HEK293 (cell line): ENCODE measurements at regions of chrX and their contacts with region 1.

Region 1: DNA sequence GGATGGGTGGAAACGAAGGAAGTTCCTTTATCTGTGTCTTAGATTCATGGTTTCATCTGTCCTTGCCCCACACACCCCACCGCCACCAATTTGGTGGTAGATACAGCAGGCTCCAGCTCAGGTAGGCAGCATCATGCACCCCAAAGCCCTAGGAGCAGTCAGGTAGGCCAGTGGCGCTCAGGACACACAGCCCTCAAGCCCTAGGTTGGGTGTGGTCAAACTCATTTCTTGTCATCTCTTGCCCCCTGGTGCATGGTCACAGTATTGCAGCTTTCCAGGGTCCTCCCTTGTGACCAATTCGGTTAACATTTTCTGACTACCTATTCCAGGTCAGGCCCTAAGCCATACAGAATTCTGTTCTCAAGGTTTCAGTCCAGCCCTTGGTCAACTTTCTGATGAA is 14.5 kb upstream of the PRRG3 start:
- H3K4me3 ChIP-seq: no peak overlapping the region
- H3K27ac ChIP-seq: no peak overlapping the region
- H3K4me1 ChIP-seq: no peaks in the 10 kb centered on the region
- CTCF ChIP-seq: peak; percentile 80

Region 2: DNA sequence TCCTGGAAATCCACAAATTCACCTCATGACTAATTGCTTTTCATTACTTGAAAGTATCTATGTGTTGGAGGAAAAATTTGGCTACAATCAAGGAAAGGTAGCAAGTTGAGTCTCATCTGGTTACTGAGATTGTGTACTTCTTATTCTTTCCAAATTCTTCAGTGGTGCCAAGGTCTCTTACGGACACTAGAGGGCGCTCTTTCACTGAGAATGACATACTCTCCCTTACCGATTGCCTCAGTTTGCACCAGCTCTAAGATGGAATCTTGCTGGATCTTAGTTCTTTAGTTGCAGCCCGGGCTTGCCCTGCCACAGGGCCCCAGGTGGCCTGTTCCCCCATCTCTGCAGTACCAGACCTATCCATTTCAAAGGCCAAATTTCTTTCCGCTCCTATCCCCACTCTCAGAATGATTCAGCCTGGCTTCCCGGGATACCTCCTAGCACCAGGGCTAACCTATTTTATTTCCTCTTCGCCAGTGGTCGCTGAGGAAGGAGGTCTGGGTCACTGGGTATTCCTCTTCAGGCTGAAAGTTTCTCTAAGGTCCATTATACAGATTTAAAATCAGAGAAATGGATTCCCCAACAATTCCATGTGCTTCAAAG is 529.0 kb before region 1 on chrX:
- CTCF ChIA-PET with region 1: interaction called, 48 read pairs
- POLR2A ChIA-PET with region 1: no interaction called
- H3K4me3 ChIP-seq: no peak overlapping the region
- H3K27ac ChIP-seq: no peak overlapping the region
- H3K4me1 ChIP-seq: no peaks in the 10 kb centered on the region
- CTCF ChIP-seq: peak; percentile 81

Region 3: DNA sequence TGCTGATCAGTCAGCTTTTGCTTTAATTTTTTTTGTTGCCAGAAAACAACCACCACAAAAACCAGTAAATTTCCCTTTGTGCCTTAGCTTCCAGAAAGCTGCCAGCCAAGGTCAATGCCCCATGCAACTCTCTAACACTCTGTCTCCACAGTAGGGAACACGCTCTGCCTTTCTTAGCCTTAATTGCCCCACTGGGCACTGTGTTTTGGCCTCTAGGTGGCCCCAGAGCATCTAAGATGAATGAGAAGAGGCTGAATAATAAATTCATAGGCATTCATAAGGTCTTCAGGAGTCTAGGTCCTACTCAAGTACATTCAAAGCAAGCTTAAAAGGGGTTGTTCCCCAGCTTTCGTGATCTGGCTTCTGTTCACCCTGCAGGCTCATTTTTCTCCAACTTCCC is 175.0 kb before region 1 on chrX:
- CTCF ChIA-PET with region 1: interaction called, 26 read pairs
- POLR2A ChIA-PET with region 1: no interaction called
- H3K4me3 ChIP-seq: no peak overlapping the region
- H3K27ac ChIP-seq: no peak overlapping the region
- H3K4me1 ChIP-seq: no peaks in the 10 kb centered on the region
- CTCF ChIP-seq: no peak

Region 4: DNA sequence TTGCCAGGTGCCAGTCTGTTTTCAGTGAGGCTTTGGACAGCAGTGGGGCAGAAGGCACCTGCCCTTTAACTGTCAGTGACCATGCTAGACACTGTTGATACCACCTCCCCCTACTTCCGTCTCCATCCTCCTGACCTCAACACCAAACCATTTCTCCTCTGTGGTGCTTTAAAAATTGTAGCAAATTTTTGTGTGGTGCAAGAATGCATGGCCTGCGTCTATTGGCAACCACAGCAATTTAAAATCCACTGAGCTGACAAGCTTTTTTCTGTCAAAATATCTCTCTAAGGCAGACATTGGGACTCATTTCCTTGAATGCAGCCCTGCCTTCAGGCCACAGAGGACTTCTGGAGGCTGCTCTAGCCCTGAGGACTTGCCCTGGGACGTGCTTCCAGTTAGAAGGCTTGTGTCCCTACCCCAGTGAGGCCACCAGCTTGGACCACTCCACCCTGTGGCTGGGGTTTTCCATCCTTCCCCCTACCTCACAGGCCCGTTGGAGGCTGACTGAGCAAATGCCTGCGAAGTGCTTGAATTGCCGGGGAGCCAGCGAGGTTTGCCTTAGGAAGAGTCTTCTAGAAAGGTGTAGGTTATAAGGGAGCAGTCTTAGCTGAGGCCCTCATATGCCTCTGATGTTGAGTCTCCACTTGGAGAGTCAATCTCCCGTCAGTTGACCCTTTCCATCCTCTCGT is 21.4 kb after region 1 on chrX:
- CTCF ChIA-PET with region 1: no interaction called
- POLR2A ChIA-PET with region 1: no interaction called
- H3K4me3 ChIP-seq: no peak overlapping the region
- H3K27ac ChIP-seq: no peak overlapping the region
- H3K4me1 ChIP-seq: no peaks in the 10 kb centered on the region
- CTCF ChIP-seq: no peak

Region 5: DNA sequence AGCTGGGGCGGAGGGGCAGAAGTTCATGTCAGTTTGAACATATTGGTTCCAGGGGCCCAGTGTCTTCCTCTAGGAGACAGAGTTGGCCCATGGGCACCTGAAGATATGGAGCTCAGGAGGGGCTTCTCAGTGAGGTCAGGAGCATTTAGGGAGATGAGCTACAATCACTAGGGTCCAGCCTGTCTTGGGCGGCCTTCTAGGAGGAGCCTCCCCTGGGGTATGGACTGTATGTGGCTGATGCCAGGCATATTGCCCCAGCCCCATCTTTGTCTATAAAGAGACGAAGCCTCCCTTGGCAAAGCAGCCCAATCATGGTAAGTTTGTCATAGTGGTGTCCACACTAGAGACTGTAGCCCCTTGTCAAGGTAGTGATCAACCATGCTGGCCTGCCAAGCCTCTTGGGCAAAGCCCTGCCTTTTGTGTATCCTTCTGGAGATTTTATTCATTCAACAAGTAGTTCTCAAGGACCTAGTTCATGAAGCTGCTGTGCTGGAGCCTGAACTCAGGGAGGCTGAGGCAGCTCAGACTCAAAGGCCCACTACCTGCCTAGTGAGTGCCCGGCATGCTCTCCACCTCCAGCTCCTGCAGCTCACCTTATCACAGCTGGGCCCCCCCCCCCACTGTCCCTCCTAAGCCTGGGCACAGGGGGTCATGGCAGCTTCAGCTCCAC is 48.4 kb after region 1 on chrX:
- CTCF ChIA-PET with region 1: no interaction called
- POLR2A ChIA-PET with region 1: no interaction called
- H3K4me3 ChIP-seq: no peak overlapping the region
- H3K27ac ChIP-seq: no peak overlapping the region
- H3K4me1 ChIP-seq: no peaks in the 10 kb centered on the region
- CTCF ChIP-seq: no peak